Activated CD4-positive, alpha-beta T cell treated with anti-CD3 and anti-CD28 coated beads for 36 hours (primary cell): ENCODE measurements at regions of chr7 and their contacts with region 1.

Region 1: DNA sequence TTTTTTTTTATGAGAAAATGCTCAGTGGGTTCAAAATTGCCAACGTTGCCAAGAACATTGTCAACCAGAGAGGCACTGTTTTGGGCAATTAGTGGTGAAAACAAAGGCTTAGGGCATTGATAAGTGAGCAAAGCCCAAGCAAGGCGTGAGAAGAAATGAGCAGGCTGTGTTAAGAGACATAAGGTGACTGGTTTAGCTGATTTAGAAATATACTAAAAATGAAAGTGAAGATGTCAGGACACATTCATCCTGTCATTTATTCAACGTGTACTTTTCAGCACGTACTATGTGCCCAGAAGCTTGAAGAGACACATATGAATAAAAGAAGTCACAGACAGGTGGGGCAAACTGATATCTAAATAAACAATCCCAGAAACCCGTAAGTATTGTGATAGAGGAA is 31.8 kb downstream of the AOAH start:
- DNase-seq: peak; percentile 52
- ATAC-seq: peak; percentile 90
- H3K4me3 Mint-ChIP-seq: peak overlapping the region; percentile 60
- H3K27ac Mint-ChIP-seq: peak overlapping the region; percentile 92
- H3K4me1 Mint-ChIP-seq: peaks cover 55% of the 10 kb centered on the region
- H3K27me3 Mint-ChIP-seq: no peaks in the 10 kb centered on the region

Region 2: DNA sequence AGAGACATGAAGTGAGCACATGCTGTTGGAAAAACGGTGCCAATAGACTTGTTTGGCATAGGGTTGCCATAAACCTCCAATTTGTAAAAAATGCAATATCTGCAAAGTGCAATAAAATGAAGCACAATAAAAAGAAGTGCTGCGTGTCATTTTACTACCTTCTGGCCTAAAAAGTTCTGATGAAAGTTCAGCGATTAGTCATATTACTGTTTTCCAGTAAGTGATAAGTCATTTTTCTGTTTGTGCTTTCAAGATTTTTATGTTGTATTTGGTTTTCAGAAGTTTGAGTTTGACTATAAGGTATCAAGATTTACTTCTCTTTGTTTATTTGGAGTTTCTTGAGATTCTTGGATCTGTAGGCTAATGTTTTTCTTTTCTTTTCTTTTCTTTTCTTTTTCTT is 15.0 kb after region 1 on chr7:
- CTCF ChIA-PET with region 1: interaction called, 3 read pairs
- POLR2A ChIA-PET with region 1: no interaction called
- intact Hi-C with region 1: loop called (anchors 1 kb)
- DNase-seq: no peak
- ATAC-seq: peak; percentile 67
- H3K4me3 Mint-ChIP-seq: peak overlapping the region; percentile 37
- H3K27ac Mint-ChIP-seq: peak overlapping the region; percentile 91
- H3K4me1 Mint-ChIP-seq: peaks cover 70% of the 10 kb centered on the region
- H3K27me3 Mint-ChIP-seq: no peaks in the 10 kb centered on the region

Region 3: GRCh38 chr7:36863901-36864701 is 171.6 kb after region 1 on chr7:
- CTCF ChIA-PET with region 1: no interaction called
- POLR2A ChIA-PET with region 1: no interaction called
- intact Hi-C with region 1: no loop called
- DNase-seq: no peak
- ATAC-seq: peak; percentile 16
- H3K4me3 Mint-ChIP-seq: no peak overlapping the region
- H3K27ac Mint-ChIP-seq: peak overlapping the region; percentile 21
- H3K4me1 Mint-ChIP-seq: peaks cover 10% of the 10 kb centered on the region
- H3K27me3 Mint-ChIP-seq: no peaks in the 10 kb centered on the region